A549 (cell line): ENCODE measurements at regions of chr11 and their contacts with region 1.

Region 1: GRCh38 chr11:9015677-9016076 is 11.9 kb upstream of the NRIP3 start:
- DNase-seq: peak; percentile 84 to 86
- ATAC-seq: peak; percentile 95 to 98
- H3K4me3 ChIP-seq: no peak overlapping the region
- H3K27ac ChIP-seq: no peak overlapping the region
- H3K4me1 ChIP-seq: no peaks in the 10 kb centered on the region
- CTCF ChIP-seq: peak; percentile 82
- EP300 ChIP-seq: no peak
- POLR2A ChIP-seq: no peak
- RAD21 ChIP-seq: peak; percentile 67 to 68

Region 2: GRCh38 chr11:8997451-8997850 is 18.2 kb before region 1 on chr11:
- CTCF ChIA-PET with region 1: interaction called, 21 read pairs
- POLR2A ChIA-PET with region 1: no interaction called
- DNase-seq: no peak
- ATAC-seq: no peak
- H3K4me3 ChIP-seq: no peak overlapping the region
- H3K27ac ChIP-seq: no peak overlapping the region
- H3K4me1 ChIP-seq: no peaks in the 10 kb centered on the region
- CTCF ChIP-seq: no peak
- EP300 ChIP-seq: no peak
- POLR2A ChIP-seq: no peak
- RAD21 ChIP-seq: no peak

Region 3: DNA sequence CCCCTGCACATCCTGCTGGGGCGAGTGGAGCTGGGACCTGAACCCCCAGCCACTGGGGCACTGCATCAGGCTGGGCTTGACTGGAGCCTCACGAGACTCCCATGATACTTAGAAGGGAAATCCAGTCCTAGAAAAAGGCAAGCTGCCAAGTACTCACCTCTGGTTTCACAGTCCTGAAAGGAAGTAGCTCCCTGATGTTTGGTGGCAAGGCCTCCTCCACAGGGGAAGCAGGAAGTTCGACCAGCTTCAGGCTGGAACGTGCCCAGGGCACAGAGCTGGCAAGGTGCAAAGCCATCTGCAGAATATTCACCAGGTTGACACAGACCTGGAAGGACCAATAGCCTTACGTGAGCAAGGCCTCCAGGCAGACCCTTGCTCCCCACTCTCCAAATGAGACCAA is 14.9 kb after region 1 on chr11:
- CTCF ChIA-PET with region 1: interaction called, 48 read pairs
- POLR2A ChIA-PET with region 1: no interaction called
- DNase-seq: no peak
- ATAC-seq: no peak
- H3K4me3 ChIP-seq: no peak overlapping the region
- H3K27ac ChIP-seq: no peak overlapping the region
- H3K4me1 ChIP-seq: no peaks in the 10 kb centered on the region
- CTCF ChIP-seq: no peak
- EP300 ChIP-seq: no peak
- POLR2A ChIP-seq: no peak
- RAD21 ChIP-seq: no peak

Region 4: GRCh38 chr11:9060700-9061111 is 45.0 kb after region 1 on chr11:
- CTCF ChIA-PET with region 1: interaction called, 10 read pairs
- POLR2A ChIA-PET with region 1: no interaction called
- DNase-seq: peak; percentile 18 to 34
- ATAC-seq: peak; percentile 45 to 71; a peak in 4 of 6 replicates
- H3K4me3 ChIP-seq: no peak overlapping the region
- H3K27ac ChIP-seq: no peak overlapping the region
- H3K4me1 ChIP-seq: peaks cover 5% of the 10 kb centered on the region
- CTCF ChIP-seq: no peak
- EP300 ChIP-seq: no peak
- POLR2A ChIP-seq: no peak
- RAD21 ChIP-seq: no peak

Region 5: GRCh38 chr11:9092853-9093778 is 77.4 kb after region 1 on chr11:
- CTCF ChIA-PET with region 1: interaction called, 30 read pairs
- POLR2A ChIA-PET with region 1: no interaction called
- DNase-seq: peak in 1 of 2 experiments; percentile 18
- ATAC-seq: peak; percentile 48 to 71; a peak in 3 of 6 replicates
- H3K4me3 ChIP-seq: no peak overlapping the region
- H3K27ac ChIP-seq: no peak overlapping the region
- H3K4me1 ChIP-seq: 0 out of 3 replicates have a peak, but pooled peaks cover 3% of the 10 kb centered on the region
- CTCF ChIP-seq: peak; percentile 46
- EP300 ChIP-seq: no peak
- POLR2A ChIP-seq: no peak
- RAD21 ChIP-seq: peak in 1 of 2 experiments; percentile 31; a peak in 1 of 5 replicates

Region 6: GRCh38 chr11:9506489-9507276 is 491.0 kb after region 1 on chr11:
- CTCF ChIA-PET with region 1: interaction called, 23 read pairs
- POLR2A ChIA-PET with region 1: no interaction called
- DNase-seq: peak; percentile 55 to 81
- ATAC-seq: peak; percentile 94 to 96
- H3K4me3 ChIP-seq: no peak overlapping the region
- H3K27ac ChIP-seq: no peak overlapping the region
- H3K4me1 ChIP-seq: peaks cover 29% of the 10 kb centered on the region
- CTCF ChIP-seq: peak; percentile 97
- EP300 ChIP-seq: no peak
- POLR2A ChIP-seq: no peak
- RAD21 ChIP-seq: peak; percentile 92 to 96